Activated T-helper 1 cell treated with anti-CD3 and anti-CD28 coated beads, Interleukin-12 subunit alpha, Interleukin-12 subunit beta, Interleukin-2, Interleukin-4 antibody, amounts not matched to agents 30 ng/mL and 10 ng/mL and 1 ng/mL, durations not matched to agents 14 hours and 24 hours and 36 hours (primary cell): ENCODE measurements at regions of chr7 and their contacts with region 1.

Region 1: GRCh38 chr7:42876182-42877068 is 35.4 kb downstream of the C7orf25 start:
- DNase-seq: peak; percentile 26
- H3K4me3 Mint-ChIP-seq: no peak overlapping the region
- H3K27ac Mint-ChIP-seq: no peak overlapping the region
- H3K4me1 Mint-ChIP-seq: peaks cover 5% of the 10 kb centered on the region
- H3K27me3 Mint-ChIP-seq: peaks cover 1% of the 10 kb centered on the region

Region 2: GRCh38 chr7:42014625-42015546 is 861.5 kb before region 1 on chr7:
- intact Hi-C with region 1: loop called (anchors 1 kb)
- DNase-seq: no peak
- H3K4me3 Mint-ChIP-seq: no peak overlapping the region
- H3K27ac Mint-ChIP-seq: no peak overlapping the region
- H3K4me1 Mint-ChIP-seq: no peaks in the 10 kb centered on the region
- H3K27me3 Mint-ChIP-seq: peaks cover 2% of the 10 kb centered on the region

Region 3: DNA sequence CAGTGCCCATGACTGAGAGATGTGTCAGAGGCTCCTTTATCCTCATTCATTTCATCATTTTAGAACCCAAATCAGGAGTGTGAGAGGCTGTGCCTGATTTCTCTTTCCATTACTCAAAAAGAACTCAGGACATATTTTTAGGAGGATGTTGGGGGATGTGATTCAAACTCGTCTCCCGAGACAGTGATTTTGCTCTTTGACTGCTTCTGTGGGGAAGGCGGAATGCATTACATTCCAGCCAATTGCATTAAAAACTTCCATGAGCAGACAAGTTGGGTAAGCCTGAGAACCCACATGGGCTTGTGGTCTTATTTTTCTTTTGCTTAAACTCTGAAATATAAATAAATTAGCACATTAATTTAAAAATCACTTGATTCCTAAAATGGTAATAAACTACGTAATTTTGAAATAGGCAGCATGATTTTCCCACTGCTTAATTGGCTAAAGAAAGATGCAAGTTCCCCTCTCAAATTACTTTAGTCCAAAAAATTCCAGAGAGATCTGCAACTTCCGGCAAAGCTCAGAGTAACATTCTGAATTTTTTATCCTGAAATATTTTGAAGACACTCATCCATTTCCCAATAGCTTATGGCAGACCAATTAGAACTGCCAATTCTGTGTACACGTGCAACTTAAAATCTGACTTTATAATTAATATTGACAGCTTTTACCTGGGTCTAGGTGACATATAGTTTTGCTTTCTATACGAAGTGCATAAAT is 150.2 kb before region 1 on chr7:
- intact Hi-C with region 1: no loop called
- DNase-seq: no peak
- H3K4me3 Mint-ChIP-seq: no peak overlapping the region
- H3K27ac Mint-ChIP-seq: no peak overlapping the region
- H3K4me1 Mint-ChIP-seq: no peaks in the 10 kb centered on the region
- H3K27me3 Mint-ChIP-seq: peaks cover under 1% of the 10 kb centered on the region

Region 4: DNA sequence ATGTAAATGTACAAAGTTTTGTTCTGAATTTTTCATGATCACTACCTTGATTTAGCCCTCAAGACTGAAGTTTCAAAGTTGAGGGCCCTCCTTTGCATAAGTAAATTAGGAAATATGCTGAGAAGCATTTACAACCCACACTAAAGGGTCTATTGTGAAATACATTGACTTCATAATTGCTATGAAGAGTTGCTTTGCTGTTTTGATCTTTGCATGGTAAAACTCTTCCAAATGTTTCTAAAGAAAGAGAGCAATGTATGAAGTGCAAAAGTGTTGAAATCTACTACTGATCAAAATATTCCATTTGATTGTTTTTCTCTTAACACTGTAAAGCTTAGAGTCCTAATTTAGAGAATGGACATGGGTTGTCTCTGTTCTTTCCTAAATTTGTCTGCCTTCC is 41.7 kb before region 1 on chr7:
- intact Hi-C with region 1: loop called (anchors 2 kb)
- DNase-seq: no peak
- H3K4me3 Mint-ChIP-seq: no peak overlapping the region
- H3K27ac Mint-ChIP-seq: no peak overlapping the region
- H3K4me1 Mint-ChIP-seq: no peaks in the 10 kb centered on the region
- H3K27me3 Mint-ChIP-seq: peaks cover 13% of the 10 kb centered on the region